ENCODE measurements at regions of chr5 and their contacts with region 1.

Region 1: DNA sequence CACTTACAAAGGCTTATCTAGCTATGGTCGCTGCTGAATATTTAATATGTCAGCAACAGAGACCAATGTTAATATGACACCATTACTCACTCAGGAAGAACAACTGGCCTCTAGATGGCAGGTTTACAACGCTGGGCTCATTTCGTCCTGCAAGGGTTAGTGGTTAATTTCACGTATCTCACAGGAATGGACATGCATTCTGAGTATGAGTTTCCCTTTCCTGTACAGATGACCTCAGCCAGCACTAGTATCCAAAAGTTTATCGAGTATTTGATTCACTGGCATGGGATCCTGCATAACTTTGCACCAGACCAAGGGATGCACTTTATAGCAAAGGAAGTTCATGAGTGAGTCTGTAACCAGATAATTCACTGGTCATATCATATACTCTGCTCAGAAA is 8.7 kb upstream of the TRPC7 start:
- DNase-seq: peak in 2 of 4 experiments; percentile 6 to 28
- ATAC-seq: peak; percentile 80
- H3K4me3 ChIP-seq: no peak overlapping the region
- H3K27ac ChIP-seq: no peak overlapping the region
- H3K4me1 ChIP-seq: no peaks in the 10 kb centered on the region
- H3K27me3 ChIP-seq: no peaks in the 10 kb centered on the region
- CTCF ChIP-seq: peak; percentile 46 to 75 (median 55); a peak in 5 of 6 replicates
- EP300 ChIP-seq: no peak
- POLR2A ChIP-seq: no peak
- RAD21 ChIP-seq: peak; percentile 62 to 67

Region 2: GRCh38 chr5:136686192-136686872 is 312.3 kb after region 1 on chr5:
- CTCF ChIA-PET with region 1: no interaction called
- POLR2A ChIA-PET with region 1: no interaction called
- in situ Hi-C with region 1: no loop called
- intact Hi-C with region 1: loop called (anchors 5 kb)
- DNase-seq: peak in 1 of 4 experiments; percentile 8
- ATAC-seq: 0 out of 3 replicates have a peak, but pooled peaks have one; percentile 45
- H3K4me3 ChIP-seq: no peak overlapping the region
- H3K27ac ChIP-seq: no peak overlapping the region
- H3K4me1 ChIP-seq: no peaks in the 10 kb centered on the region
- H3K27me3 ChIP-seq: no peaks in the 10 kb centered on the region
- CTCF ChIP-seq: peak; percentile 17 to 54 (median 25); a peak in 2 of 6 replicates
- EP300 ChIP-seq: no peak
- POLR2A ChIP-seq: no peak
- RAD21 ChIP-seq: peak; percentile 23 to 60; a peak in 3 of 4 replicates

Region 3: GRCh38 chr5:136776022-136776927 is 402.3 kb after region 1 on chr5:
- CTCF ChIA-PET with region 1: no interaction called
- POLR2A ChIA-PET with region 1: no interaction called
- in situ Hi-C with region 1: loop called (anchors 5 kb)
- intact Hi-C with region 1: no loop called
- DNase-seq: no peak
- ATAC-seq: no peak
- H3K4me3 ChIP-seq: no peak overlapping the region
- H3K27ac ChIP-seq: no peak overlapping the region
- H3K4me1 ChIP-seq: no peaks in the 10 kb centered on the region
- H3K27me3 ChIP-seq: no peaks in the 10 kb centered on the region
- CTCF ChIP-seq: no peak
- EP300 ChIP-seq: no peak
- POLR2A ChIP-seq: no peak
- RAD21 ChIP-seq: no peak

Measured in K562 (cell line).